ENCODE measurements at regions of chr10 and their contacts with region 1.

Region 1: GRCh38 chr10:78015546-78015945 is 13.8 kb downstream of the POLR3A start:
- DNase-seq: no peak
- H3K4me3 ChIP-seq: no peak overlapping the region
- CTCF ChIP-seq: no peak

Region 2: GRCh38 chr10:77846718-77847630 is 168.6 kb before region 1 on chr10:
- in situ Hi-C with region 1: loop called (anchors 5 kb)
- DNase-seq: peak; percentile 48
- H3K4me3 ChIP-seq: no peak overlapping the region
- CTCF ChIP-seq: peak; percentile 97